Naive thymus-derived CD4-positive, alpha-beta T cell (primary cell): ENCODE measurements at regions of chr6 and their contacts with region 1.

Region 1: DNA sequence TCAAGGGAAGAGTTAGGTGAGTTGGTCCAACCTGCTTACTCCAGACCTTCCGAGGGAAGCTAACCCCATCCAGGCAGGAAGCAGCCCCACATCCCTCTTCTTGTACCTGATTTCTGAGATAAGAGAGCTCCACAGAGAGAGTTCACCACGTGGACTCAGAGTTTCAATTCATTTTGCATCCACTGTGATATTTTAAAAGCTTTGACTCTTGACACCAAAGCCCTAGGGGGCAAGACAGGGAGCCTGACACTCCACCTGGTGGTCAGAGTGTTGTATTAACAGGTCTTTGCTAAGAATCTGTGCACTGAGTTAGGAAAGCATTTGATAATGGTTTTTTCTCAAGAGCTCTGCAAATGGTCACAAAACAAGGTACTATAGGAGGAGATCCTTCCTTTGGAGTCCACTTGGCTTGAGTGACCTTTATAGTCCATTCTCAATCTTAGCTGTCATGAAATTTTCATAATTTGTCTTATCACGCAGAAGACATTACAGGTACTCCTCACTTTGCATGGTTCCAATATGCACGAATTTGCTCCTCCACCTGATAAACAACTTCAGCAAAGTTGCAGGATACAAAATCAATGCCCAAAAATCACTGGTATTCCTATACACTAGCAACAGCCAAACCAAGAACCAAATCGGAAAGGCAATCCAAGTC is 56.2 kb upstream of the RIPOR2 start:
- DNase-seq: peak; percentile 34 to 88 (median 81)
- ATAC-seq: peak; percentile 97
- H3K4me3 ChIP-seq: peak overlapping the region; percentile 37
- H3K4me3 Mint-ChIP-seq: peak overlapping the region; percentile 2 to 81 (median 68)
- H3K27ac ChIP-seq: peak overlapping the region; percentile 61
- H3K27ac Mint-ChIP-seq: peak overlapping the region; percentile 73 to 96 (median 88)
- H3K4me1 ChIP-seq: peaks cover 11 to 29% of the 10 kb centered on the region in 2 donors
- H3K4me1 Mint-ChIP-seq: peaks cover 47 to 88% (median 81%) of the 10 kb centered on the region in 7 donors
- H3K27me3 ChIP-seq: no peaks in the 10 kb centered on the region
- H3K27me3 Mint-ChIP-seq: no peaks in the 10 kb centered on the region

Region 2: DNA sequence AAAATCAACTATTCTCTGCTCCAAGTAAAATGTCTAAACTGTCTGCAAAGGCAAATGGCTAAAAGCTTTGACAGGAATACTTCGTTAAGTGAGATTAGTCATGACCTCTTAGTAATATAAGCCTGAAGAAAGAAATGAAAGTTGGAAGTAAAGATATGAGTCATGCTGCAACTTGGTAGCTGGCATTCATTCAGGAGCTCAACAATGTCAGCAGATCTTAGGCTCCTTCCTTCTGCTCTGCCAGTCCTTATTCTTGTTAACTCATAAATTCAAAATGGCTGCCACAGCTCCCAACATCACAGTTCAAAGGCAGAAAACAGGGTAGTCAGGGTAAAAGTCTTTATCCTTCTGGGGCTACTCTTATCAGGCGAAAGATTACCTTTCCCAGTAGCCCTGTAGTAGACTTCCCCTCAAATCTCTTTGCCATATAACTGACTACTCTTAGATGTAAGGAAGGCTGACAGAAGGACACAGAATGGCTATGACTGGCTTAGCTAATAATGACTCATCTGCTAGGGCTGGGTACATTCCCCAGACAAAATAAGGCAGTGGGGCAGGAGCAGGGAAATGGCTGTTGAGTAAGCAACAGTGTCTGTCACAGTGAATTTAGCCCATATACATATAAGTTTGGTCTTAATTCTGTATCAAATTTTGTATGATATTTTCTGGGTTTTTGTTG is 248.5 kb before region 1 on chr6:
- CTCF ChIA-PET with region 1: no interaction called
- POLR2A ChIA-PET with region 1: no interaction called
- intact Hi-C with region 1: no loop called
- DNase-seq: peak in 1 of 9 donors; percentile 25
- ATAC-seq: peak; percentile 83
- H3K4me3 ChIP-seq: no peak overlapping the region
- H3K4me3 Mint-ChIP-seq: peak overlapping the region in 1 of 10 donors; percentile 2
- H3K27ac ChIP-seq: no peak overlapping the region
- H3K27ac Mint-ChIP-seq: peak overlapping the region in 1 of 9 donors; percentile 56
- H3K4me1 ChIP-seq: no peaks in the 10 kb centered on the region
- H3K4me1 Mint-ChIP-seq: peaks cover 0 to 16% (median 0%) of the 10 kb centered on the region in 7 donors
- H3K27me3 ChIP-seq: no peaks in the 10 kb centered on the region
- H3K27me3 Mint-ChIP-seq: no peaks in the 10 kb centered on the region

Region 3: DNA sequence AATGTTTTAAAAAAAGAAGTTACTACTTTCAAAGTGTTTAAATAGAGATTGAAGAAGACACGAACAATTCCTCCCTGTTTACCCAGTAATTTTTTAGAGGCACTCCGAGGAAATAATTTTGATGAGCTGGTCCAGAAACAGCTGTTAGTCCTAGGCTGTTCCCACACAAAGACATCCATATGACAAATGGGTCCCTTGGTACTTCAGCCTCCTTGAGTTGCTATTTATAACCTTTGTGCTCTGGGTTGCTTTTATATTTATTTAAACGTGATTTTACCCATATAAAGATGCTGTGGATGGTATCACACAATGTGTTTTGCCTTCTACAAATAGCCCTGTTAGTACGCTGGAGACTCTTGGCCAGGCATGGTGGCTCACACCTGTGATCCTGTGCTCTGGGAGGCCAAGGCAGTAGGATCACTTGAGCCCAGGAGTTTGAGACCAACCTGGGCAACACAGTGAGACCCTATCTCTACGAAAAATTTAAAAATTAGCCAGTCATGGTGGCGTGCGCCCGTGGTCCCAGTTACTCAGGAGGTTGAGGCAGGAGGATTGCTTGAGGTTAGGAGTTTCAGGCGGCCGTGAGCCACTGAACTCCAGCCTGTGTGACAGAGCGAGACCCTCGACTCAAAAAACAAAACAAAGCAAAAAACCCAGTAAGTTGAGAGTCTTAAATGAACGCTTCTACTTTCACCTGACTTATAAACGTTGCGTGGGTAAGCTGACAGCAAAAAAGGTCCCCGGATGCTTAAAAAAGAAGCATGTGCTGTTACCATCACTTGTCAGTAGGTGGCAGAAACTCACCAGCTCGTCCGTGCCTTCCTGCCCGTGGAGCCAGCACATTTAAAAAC is 136.3 kb before region 1 on chr6:
- CTCF ChIA-PET with region 1: interaction called, 47 read pairs
- POLR2A ChIA-PET with region 1: interaction called, 24 read pairs
- intact Hi-C with region 1: loop called (anchors 1 kb)
- DNase-seq: peak; percentile 25 to 83 (median 74)
- ATAC-seq: peak; percentile 78
- H3K4me3 ChIP-seq: no peak overlapping the region
- H3K4me3 Mint-ChIP-seq: peak overlapping the region in 8 of 10 donors; percentile 48 to 89 (median 62)
- H3K27ac ChIP-seq: peak overlapping the region; percentile 72
- H3K27ac Mint-ChIP-seq: peak overlapping the region; percentile 86 to 99 (median 94)
- H3K4me1 ChIP-seq: peaks cover 47 to 59% of the 10 kb centered on the region in 2 donors
- H3K4me1 Mint-ChIP-seq: peaks cover 51 to 72% (median 66%) of the 10 kb centered on the region in 7 donors
- H3K27me3 ChIP-seq: no peaks in the 10 kb centered on the region
- H3K27me3 Mint-ChIP-seq: no peaks in the 10 kb centered on the region

Region 4: DNA sequence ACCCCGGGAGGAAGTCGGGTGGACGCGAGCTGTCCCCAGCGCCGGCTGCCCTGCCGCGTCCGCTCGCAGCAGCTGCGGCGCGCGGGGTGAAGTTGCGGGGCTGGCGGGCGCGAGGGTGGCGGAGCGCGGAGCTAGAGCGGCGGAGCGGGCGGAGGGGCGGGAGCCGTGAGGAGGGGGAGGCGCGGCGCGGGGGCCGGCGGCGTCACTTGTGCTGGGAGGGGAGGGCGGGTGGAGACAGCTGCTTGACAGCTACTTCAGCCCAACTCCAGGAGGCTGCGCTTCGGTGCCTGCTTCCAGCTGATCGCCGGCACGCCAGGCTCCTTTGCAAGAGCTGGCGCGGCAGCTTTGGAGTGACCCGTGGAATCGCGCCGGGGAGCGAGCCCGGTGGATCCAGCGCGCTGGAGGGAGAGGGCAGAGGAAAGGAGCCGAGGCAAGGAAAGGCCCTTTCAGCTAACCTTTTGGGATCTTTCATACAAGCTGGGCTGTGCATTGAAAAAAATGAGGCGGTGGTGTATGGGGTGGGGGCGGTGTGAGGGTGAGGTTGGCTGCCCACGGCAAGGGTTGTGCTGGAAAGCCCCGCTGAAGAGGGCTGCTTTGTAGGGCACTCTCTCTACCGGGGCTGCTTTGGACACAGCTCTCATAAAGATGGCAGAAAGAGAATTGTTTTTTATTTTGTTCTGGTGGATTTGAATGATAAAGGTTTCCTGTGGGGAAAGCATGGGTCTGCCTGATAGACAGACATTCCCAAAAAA is 80.8 kb before region 1 on chr6:
- CTCF ChIA-PET with region 1: interaction called, 54 read pairs
- POLR2A ChIA-PET with region 1: interaction called, 52 read pairs
- intact Hi-C with region 1: loop called (anchors 1 to 5 kb)
- DNase-seq: peak in 6 of 9 donors; percentile 37 to 67 (median 56)
- ATAC-seq: peak; percentile 60
- H3K4me3 ChIP-seq: peak overlapping the region; percentile 41
- H3K4me3 Mint-ChIP-seq: peak overlapping the region; percentile 92 to 97 (median 96)
- H3K27ac ChIP-seq: peak overlapping the region; percentile 75
- H3K27ac Mint-ChIP-seq: peak overlapping the region; percentile 88 to 99 (median 97)
- H3K4me1 ChIP-seq: peaks cover 88 to 93% of the 10 kb centered on the region in 2 donors
- H3K4me1 Mint-ChIP-seq: peaks cover 88 to 98% (median 97%) of the 10 kb centered on the region in 7 donors
- H3K27me3 ChIP-seq: no peaks in the 10 kb centered on the region
- H3K27me3 Mint-ChIP-seq: no peaks in the 10 kb centered on the region

Region 5: DNA sequence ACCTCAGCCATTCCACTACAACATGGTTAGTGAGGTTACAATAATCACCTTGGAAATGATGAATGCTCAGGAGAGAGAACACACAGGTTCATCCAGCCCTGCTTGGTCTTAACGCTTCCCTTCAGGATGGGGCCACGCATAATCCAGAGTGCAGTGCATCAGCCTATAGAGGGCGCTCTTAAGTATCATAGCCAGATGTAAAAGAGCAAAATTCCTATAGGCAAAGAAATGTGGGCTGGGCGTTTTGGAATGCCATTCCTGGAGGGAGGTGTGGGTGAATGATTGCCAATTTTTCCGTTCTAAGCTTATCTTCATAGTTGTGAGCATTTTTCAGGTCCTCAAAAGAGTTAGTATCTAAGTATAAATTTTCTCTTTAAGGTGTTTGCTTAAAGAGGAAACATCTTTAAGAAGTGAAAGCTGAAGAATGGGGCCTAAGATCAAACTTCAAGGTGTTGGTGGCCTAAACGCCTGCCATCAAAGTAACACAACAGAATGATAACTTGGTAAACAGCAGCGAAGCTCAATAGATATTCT is 58.0 kb before region 1 on chr6:
- CTCF ChIA-PET with region 1: interaction called, 293 read pairs
- POLR2A ChIA-PET with region 1: interaction called, 733 read pairs
- intact Hi-C with region 1: loop called (anchors 1 kb)
- DNase-seq: peak in 7 of 9 donors; percentile 59 to 78 (median 72)
- ATAC-seq: peak; percentile 52
- H3K4me3 ChIP-seq: peak overlapping the region; percentile 89
- H3K4me3 Mint-ChIP-seq: peak overlapping the region; percentile 89 to 100 (median 98)
- H3K27ac ChIP-seq: peak overlapping the region; percentile 85
- H3K27ac Mint-ChIP-seq: peak overlapping the region; percentile 88 to 99 (median 93)
- H3K4me1 ChIP-seq: peaks cover 37 to 44% of the 10 kb centered on the region in 2 donors
- H3K4me1 Mint-ChIP-seq: peaks cover 44 to 65% (median 50%) of the 10 kb centered on the region in 7 donors
- H3K27me3 ChIP-seq: no peaks in the 10 kb centered on the region
- H3K27me3 Mint-ChIP-seq: no peaks in the 10 kb centered on the region

Region 6: GRCh38 chr6:24960991-24961475 is 30.9 kb before region 1 on chr6:
- CTCF ChIA-PET with region 1: interaction called, 19 read pairs
- POLR2A ChIA-PET with region 1: interaction called, 1,138 read pairs
- intact Hi-C with region 1: no loop called
- DNase-seq: peak in 6 of 9 donors; percentile 46 to 70 (median 60)
- ATAC-seq: peak; percentile 80
- H3K4me3 ChIP-seq: peak overlapping the region; percentile 14
- H3K4me3 Mint-ChIP-seq: peak overlapping the region; percentile 46 to 81 (median 72)
- H3K27ac ChIP-seq: peak overlapping the region; percentile 64
- H3K27ac Mint-ChIP-seq: peak overlapping the region; percentile 44 to 97 (median 93)
- H3K4me1 ChIP-seq: peaks cover 70 to 74% of the 10 kb centered on the region in 2 donors
- H3K4me1 Mint-ChIP-seq: peaks cover 59 to 100% (median 90%) of the 10 kb centered on the region in 7 donors
- H3K27me3 ChIP-seq: no peaks in the 10 kb centered on the region
- H3K27me3 Mint-ChIP-seq: no peaks in the 10 kb centered on the region

Region 7: GRCh38 chr6:24980507-24981387 is 11.2 kb before region 1 on chr6:
- CTCF ChIA-PET with region 1: interaction called, 20 read pairs
- POLR2A ChIA-PET with region 1: interaction called, 45 read pairs
- intact Hi-C with region 1: loop called in 1 of 2 experiments (anchors 2 kb)
- DNase-seq: no peak
- ATAC-seq: no peak
- H3K4me3 ChIP-seq: no peak overlapping the region
- H3K4me3 Mint-ChIP-seq: peak overlapping the region in 3 of 10 donors; percentile 21 to 36 (median 29)
- H3K27ac ChIP-seq: no peak overlapping the region
- H3K27ac Mint-ChIP-seq: peak overlapping the region in 5 of 9 donors; percentile 13 to 80 (median 62)
- H3K4me1 ChIP-seq: peaks cover 23% of the 10 kb centered on the region in 2 donors
- H3K4me1 Mint-ChIP-seq: peaks cover 32 to 83% (median 67%) of the 10 kb centered on the region in 7 donors
- H3K27me3 ChIP-seq: no peaks in the 10 kb centered on the region
- H3K27me3 Mint-ChIP-seq: no peaks in the 10 kb centered on the region

Region 8: DNA sequence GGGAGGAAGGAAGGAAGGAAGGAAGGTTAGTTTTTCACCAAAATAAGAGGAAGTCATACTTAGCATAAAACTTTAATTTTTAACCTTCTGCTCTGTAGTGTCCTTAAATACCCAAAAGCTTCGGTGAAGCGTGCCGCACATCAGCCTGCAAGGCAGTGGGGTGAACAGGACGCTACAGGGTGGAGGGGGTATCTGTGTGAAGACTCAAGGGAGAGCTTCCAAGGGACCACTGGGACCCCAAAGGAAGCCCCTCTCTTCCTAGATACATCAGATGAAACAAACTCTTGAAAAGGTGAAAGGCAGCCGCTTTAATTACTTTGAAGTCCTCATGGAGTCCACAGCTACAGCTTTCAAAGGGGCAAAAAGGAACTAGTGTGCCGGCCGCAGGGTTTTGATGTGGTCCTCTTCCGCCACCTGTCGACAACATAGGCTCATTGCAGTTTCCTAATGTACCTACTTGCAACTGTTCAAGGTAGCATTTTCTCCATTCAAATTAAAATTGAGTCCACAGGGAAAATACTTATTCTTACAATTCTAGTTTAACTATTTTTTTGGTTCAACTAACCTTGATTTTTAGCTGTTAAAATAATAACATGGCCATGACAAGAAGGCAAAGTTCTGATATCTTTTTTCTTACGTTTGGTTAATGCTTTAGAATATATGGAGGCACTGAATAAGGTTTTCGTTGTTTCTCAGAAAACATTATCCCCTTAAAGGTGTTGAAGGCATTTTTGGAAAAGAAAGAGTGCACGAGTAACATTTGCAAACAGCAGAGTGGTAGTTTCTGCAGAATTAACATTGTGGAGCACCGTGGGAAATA is 78.8 kb after region 1 on chr6:
- CTCF ChIA-PET with region 1: interaction called, 6 read pairs
- POLR2A ChIA-PET with region 1: interaction called, 3 read pairs
- intact Hi-C with region 1: loop called in 1 of 2 experiments (anchors 1 kb)
- DNase-seq: peak; percentile 54 to 85 (median 79)
- ATAC-seq: peak; percentile 99
- H3K4me3 ChIP-seq: no peak overlapping the region
- H3K4me3 Mint-ChIP-seq: peak overlapping the region in 8 of 10 donors; percentile 10 to 70 (median 50)
- H3K27ac ChIP-seq: no peak overlapping the region
- H3K27ac Mint-ChIP-seq: peak overlapping the region; percentile 43 to 92 (median 83)
- H3K4me1 ChIP-seq: peaks cover 0 to 3% of the 10 kb centered on the region in 2 donors
- H3K4me1 Mint-ChIP-seq: peaks cover 5 to 15% (median 9%) of the 10 kb centered on the region in 7 donors
- H3K27me3 ChIP-seq: no peaks in the 10 kb centered on the region
- H3K27me3 Mint-ChIP-seq: peaks cover 0 to 7% (median 0%) of the 10 kb centered on the region in 5 donors